MCF 10A (cell line): ENCODE measurements at regions of chr5 and their contacts with region 1.

Region 1: GRCh38 chr5:87412630-87413342 is at the start of gene CCNH:
- DNase-seq: peak; percentile 99
- H3K4me3 Mint-ChIP-seq: peak within 1 kb of the TSS; percentile 85
- H3K27ac Mint-ChIP-seq: peak within 1 kb of the TSS; percentile 95
- H3K4me1 Mint-ChIP-seq: peaks cover 20% of the 10 kb centered on the region
- H3K27me3 Mint-ChIP-seq: no peaks in the 10 kb centered on the region
- CTCF ChIP-seq: no peak
- total RNA-seq, gene CCNH: 51.5 and 56.9 TPM in 2 replicates

Region 2: GRCh38 chr5:86617756-86618576 is 794.8 kb before region 1 on chr5 and contains the start of gene COX7C:
- CTCF ChIA-PET with region 1: no interaction called
- POLR2A ChIA-PET with region 1: no interaction called
- intact Hi-C with region 1: loop called (anchors 5 kb)
- DNase-seq: peak; percentile 96
- H3K4me3 Mint-ChIP-seq: peak within 1 kb of the TSS; percentile 98
- H3K27ac Mint-ChIP-seq: peak within 1 kb of the TSS; percentile 94
- H3K4me1 Mint-ChIP-seq: peaks cover 9% of the 10 kb centered on the region
- H3K27me3 Mint-ChIP-seq: peaks cover 28% of the 10 kb centered on the region
- CTCF ChIP-seq: no peak
- total RNA-seq, gene COX7C: 402 and 460 TPM in 2 replicates

Region 3: GRCh38 chr5:87361031-87361443 is 51.7 kb before region 1 on chr5:
- CTCF ChIA-PET with region 1: no interaction called
- POLR2A ChIA-PET with region 1: no interaction called
- intact Hi-C with region 1: no loop called
- DNase-seq: peak; percentile 8
- H3K4me3 Mint-ChIP-seq: no peak overlapping the region
- H3K27ac Mint-ChIP-seq: peak overlapping the region; percentile 57
- H3K4me1 Mint-ChIP-seq: peaks cover 11% of the 10 kb centered on the region
- H3K27me3 Mint-ChIP-seq: no peaks in the 10 kb centered on the region
- CTCF ChIP-seq: no peak

Region 4: DNA sequence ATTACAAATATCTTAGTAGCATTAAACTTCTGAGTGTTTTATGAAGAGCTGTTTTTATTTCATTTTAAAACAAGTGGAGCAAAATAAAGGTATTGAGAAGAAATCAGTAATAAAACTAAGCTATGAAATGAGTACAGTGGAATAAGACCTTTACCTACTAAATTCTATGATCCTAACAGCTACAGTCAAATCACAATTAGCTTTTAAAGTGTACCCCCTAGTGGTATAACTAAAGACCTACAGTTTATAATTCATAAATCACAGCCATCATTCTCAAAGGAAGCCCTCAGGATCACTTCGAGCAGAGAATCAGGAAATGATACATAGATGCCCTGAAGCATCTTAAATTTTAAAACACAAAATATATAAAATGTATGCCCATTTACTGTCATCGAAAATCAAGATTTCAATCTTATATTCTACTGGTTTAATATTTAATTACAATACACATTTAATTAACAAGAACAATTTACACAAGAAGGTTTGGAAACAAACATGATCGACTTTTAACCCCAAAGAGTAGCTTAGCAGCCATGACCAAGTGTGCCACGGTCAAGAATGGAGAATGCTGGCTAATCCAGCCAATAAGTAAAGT is 12.4 kb before region 1 on chr5:
- CTCF ChIA-PET with region 1: interaction called, 17 read pairs
- POLR2A ChIA-PET with region 1: interaction called, 16 read pairs
- intact Hi-C with region 1: no loop called
- DNase-seq: peak; percentile 46
- H3K4me3 Mint-ChIP-seq: no peak overlapping the region
- H3K27ac Mint-ChIP-seq: no peak overlapping the region
- H3K4me1 Mint-ChIP-seq: peaks cover 2% of the 10 kb centered on the region
- H3K27me3 Mint-ChIP-seq: no peaks in the 10 kb centered on the region
- CTCF ChIP-seq: peak; percentile 54

Region 5: DNA sequence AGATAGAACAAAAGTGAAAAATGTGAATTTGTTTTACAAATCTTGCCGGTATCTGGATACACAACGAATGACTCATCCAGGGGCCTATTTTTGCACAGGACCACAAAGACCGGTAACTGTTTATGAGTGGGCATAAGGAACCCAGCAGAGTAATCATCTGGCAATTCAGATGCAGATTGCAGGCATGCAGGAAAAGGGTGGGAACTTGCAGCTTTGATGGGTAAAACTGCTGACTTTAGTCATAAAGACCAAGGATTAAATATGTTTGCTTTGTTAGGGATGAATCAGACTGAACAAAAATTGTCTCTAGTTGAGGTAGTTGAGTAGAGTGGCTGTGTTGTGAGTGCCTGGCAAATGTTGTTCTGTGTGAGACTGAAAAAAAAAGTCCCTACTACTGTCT is 309.5 kb after region 1 on chr5:
- CTCF ChIA-PET with region 1: no interaction called
- POLR2A ChIA-PET with region 1: no interaction called
- intact Hi-C with region 1: no loop called
- DNase-seq: no peak
- H3K4me3 Mint-ChIP-seq: no peak overlapping the region
- H3K27ac Mint-ChIP-seq: no peak overlapping the region
- H3K4me1 Mint-ChIP-seq: no peaks in the 10 kb centered on the region
- H3K27me3 Mint-ChIP-seq: peaks cover 21% of the 10 kb centered on the region
- CTCF ChIP-seq: no peak